ENCODE measurements at regions of chr11 and their contacts with region 1.

Region 1: GRCh38 chr11:128886406-128887124 is 4.6 kb upstream of the KCNJ5 start:
- DNase-seq: peak in 1 of 2 donors; percentile 26
- H3K4me3 ChIP-seq: no peak overlapping the region
- H3K27ac ChIP-seq: no peak overlapping the region
- H3K4me1 ChIP-seq: peaks cover 9 to 10% of the 10 kb centered on the region in 2 donors
- H3K27me3 ChIP-seq: no peaks in the 10 kb centered on the region
- CTCF ChIP-seq: peak in 1 of 6 experiments; percentile 8
- POLR2A ChIP-seq: no peak

Region 2: DNA sequence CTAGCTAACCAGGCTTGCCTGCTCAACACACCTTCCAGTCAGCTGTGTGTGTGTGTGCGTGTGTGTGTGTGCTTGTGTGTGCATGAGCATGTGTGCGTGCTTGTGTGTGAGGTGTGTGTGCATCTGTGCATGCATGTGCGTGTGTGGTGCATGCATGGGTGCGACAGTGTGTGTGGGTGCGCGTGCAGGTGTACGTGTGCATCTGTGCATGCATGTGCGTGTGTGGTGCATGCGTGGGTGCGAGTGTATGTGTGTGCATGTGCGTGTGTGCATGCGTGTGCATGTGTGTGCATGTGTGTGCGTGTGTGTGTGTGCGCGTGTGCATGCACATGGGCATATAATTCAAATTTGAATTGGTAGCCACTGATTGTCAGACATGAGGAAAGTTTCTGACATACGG is 66.6 kb after region 1 on chr11:
- intact Hi-C with region 1: loop called (anchors 2 kb)
- DNase-seq: no peak
- H3K4me3 ChIP-seq: no peak overlapping the region
- H3K27ac ChIP-seq: no peak overlapping the region
- H3K4me1 ChIP-seq: no peaks in the 10 kb centered on the region
- H3K27me3 ChIP-seq: no peaks in the 10 kb centered on the region
- CTCF ChIP-seq: no peak
- POLR2A ChIP-seq: no peak

Measured in thyroid gland (tissue), 4 donors.